ENCODE measurements at regions of chr6 and their contacts with region 1.

Region 1: GRCh38 chr6:30396833-30397479 is 52.0 kb downstream of the RPP21 start:
- DNase-seq: peak; percentile 87
- ATAC-seq: peak; percentile 100
- H3K4me3 Mint-ChIP-seq: no peak overlapping the region
- H3K27ac Mint-ChIP-seq: no peak overlapping the region
- H3K4me1 Mint-ChIP-seq: no peaks in the 10 kb centered on the region
- H3K27me3 Mint-ChIP-seq: peaks cover 60% of the 10 kb centered on the region

Region 2: DNA sequence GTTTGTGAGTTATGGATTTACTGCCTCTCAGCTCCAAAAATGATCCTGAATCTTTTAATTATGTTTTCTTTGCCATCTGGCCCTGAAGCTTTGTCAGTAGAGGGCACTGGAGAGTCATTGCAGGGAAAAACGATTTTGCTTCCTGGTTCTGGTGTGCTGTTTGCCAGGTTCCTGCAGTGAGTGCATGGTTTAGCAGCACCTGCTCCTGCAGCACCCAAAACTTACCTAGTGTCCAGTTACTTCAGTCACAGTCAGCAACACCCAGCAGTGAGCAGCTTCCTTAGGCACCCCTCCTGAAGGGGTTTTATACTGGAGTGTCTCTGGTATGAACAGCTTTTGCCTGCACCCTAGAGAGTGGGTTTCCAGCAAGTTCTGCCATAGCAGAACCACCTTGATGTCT is 177.7 kb before region 1 on chr6:
- CTCF ChIA-PET with region 1: interaction called, 16 read pairs
- DNase-seq: peak; percentile 67
- ATAC-seq: peak; percentile 41
- H3K4me3 Mint-ChIP-seq: no peak overlapping the region
- H3K27ac Mint-ChIP-seq: no peak overlapping the region
- H3K4me1 Mint-ChIP-seq: peaks cover 15% of the 10 kb centered on the region
- H3K27me3 Mint-ChIP-seq: no peaks in the 10 kb centered on the region

Region 3: GRCh38 chr6:30238174-30238795 is 158.7 kb before region 1 on chr6:
- CTCF ChIA-PET with region 1: interaction called, 31 read pairs
- DNase-seq: peak; percentile 58
- ATAC-seq: peak; percentile 55
- H3K4me3 Mint-ChIP-seq: no peak overlapping the region
- H3K27ac Mint-ChIP-seq: no peak overlapping the region
- H3K4me1 Mint-ChIP-seq: peaks cover 1% of the 10 kb centered on the region
- H3K27me3 Mint-ChIP-seq: peaks cover 51% of the 10 kb centered on the region

Region 4: GRCh38 chr6:30357678-30358540 is 39.0 kb before region 1 on chr6:
- CTCF ChIA-PET with region 1: interaction called, 13 read pairs
- DNase-seq: peak; percentile 62
- ATAC-seq: peak; percentile 88
- H3K4me3 Mint-ChIP-seq: peak overlapping the region; percentile 54
- H3K27ac Mint-ChIP-seq: no peak overlapping the region
- H3K4me1 Mint-ChIP-seq: peaks cover 5% of the 10 kb centered on the region
- H3K27me3 Mint-ChIP-seq: peaks cover 85% of the 10 kb centered on the region